Mammary epithelial cell (primary cell): ENCODE measurements at regions of chr20 and their contacts with region 1.

Region 1: GRCh38 chr20:235891-236290 is 8.8 kb downstream of the DEFB129 start:
- DNase-seq: peak; percentile 69
- H3K4me3 ChIP-seq: no peak overlapping the region
- H3K27ac ChIP-seq: peak overlapping the region; percentile 0
- H3K4me1 ChIP-seq: peaks cover 14% of the 10 kb centered on the region
- H3K27me3 ChIP-seq: no peaks in the 10 kb centered on the region
- CTCF ChIP-seq: peak; percentile 40 to 77

Region 2: GRCh38 chr20:168876-169275 is 67.0 kb before region 1 on chr20:
- CTCF ChIA-PET with region 1: no interaction called
- dilution Hi-C with region 1: loop called (anchors 5 kb)
- in situ Hi-C with region 1: no loop called
- intact Hi-C with region 1: no loop called
- DNase-seq: no peak
- H3K4me3 ChIP-seq: no peak overlapping the region
- H3K27ac ChIP-seq: no peak overlapping the region
- H3K4me1 ChIP-seq: no peaks in the 10 kb centered on the region
- H3K27me3 ChIP-seq: no peaks in the 10 kb centered on the region
- CTCF ChIP-seq: no peak

Region 3: GRCh38 chr20:189611-190010 is 46.3 kb before region 1 on chr20 and contains the start of gene DEFB128:
- CTCF ChIA-PET with region 1: no interaction called
- dilution Hi-C with region 1: no loop called
- in situ Hi-C with region 1: no loop called
- intact Hi-C with region 1: no loop called
- DNase-seq: no peak
- H3K4me3 ChIP-seq: no peak within 1 kb of the TSS
- H3K27ac ChIP-seq: no peak within 1 kb of the TSS
- H3K4me1 ChIP-seq: no peaks in the 10 kb centered on the region
- H3K27me3 ChIP-seq: peaks cover 11% of the 10 kb centered on the region
- CTCF ChIP-seq: no peak
- total RNA-seq, gene DEFB128: not detected

Region 4: DNA sequence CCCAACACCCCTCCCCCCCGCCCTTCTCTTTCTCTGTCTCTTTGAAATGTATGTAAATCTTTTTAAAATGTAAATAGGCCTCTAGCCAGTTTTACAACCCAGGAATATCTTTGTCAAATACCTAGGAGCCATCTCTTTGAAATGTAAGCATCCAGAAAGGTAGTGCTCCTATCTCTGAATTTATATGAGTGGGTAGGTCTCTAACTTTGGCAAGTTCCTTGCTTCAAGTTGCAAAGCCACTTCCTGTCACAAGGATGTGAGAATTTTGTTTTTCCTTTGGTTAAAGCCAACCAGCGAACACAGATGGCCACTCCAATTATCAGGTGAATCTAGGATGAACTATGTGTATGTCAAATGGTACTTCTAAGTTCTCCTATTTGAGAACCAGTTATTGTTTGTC is 15.5 kb after region 1 on chr20:
- CTCF ChIA-PET with region 1: no interaction called
- dilution Hi-C with region 1: no loop called
- in situ Hi-C with region 1: no loop called
- intact Hi-C with region 1: no loop called
- DNase-seq: no peak
- H3K4me3 ChIP-seq: no peak overlapping the region
- H3K27ac ChIP-seq: no peak overlapping the region
- H3K4me1 ChIP-seq: no peaks in the 10 kb centered on the region
- H3K27me3 ChIP-seq: no peaks in the 10 kb centered on the region
- CTCF ChIP-seq: no peak

Region 5: DNA sequence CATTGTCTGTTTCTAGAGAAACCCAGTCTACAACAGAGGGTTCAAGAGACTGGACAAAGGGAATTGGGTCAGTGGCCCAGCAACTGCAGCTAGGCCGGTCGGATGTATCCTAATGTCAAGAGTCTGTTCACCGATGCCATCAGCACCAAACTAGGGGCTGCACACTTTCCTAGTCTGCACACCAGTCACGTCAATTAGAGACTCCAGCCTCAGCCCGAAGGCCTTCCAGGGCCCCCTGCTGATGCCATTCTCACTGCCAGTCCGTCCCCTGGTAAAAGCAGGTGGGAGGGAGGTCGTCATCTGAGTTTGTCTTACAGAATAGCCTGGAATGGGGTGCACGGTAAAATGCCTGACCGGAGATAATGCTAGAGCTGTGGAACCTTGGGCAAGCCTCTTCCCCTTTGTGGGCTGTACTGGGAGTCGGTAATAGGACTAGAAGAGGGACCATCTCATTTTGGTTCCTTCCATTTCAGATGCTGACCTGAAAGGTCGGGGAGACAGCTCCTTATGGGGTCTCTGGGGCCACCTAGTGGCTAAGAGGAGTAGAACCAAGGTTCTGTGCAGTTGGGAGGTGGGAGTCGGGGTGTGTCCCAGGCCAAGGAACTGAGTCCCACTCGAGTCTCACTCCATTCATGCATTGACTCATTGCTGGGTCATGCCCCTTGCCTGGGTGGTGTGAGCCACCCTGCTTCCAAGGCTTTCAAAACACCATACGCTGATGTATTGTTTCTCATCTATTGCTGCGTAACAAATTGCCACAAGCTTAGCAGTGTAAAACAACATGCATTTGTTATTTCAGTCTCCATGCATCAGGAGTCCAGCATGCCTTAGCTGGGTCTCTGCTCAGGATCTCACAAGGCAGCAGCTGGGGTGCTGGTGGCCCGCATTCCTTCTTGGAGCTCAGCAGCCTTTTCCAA is 94.6 kb after region 1 on chr20:
- CTCF ChIA-PET with region 1: interaction called, 3 read pairs
- dilution Hi-C with region 1: loop called (anchors 5 kb)
- in situ Hi-C with region 1: no loop called
- intact Hi-C with region 1: loop called (anchors 1 kb)
- DNase-seq: peak; percentile 50
- H3K4me3 ChIP-seq: no peak overlapping the region
- H3K27ac ChIP-seq: no peak overlapping the region
- H3K4me1 ChIP-seq: peaks cover 10% of the 10 kb centered on the region
- H3K27me3 ChIP-seq: no peaks in the 10 kb centered on the region
- CTCF ChIP-seq: peak; percentile 84 to 89

Region 6: GRCh38 chr20:478949-479429 is 243.1 kb after region 1 on chr20:
- CTCF ChIA-PET with region 1: no interaction called
- dilution Hi-C with region 1: no loop called
- in situ Hi-C with region 1: no loop called
- intact Hi-C with region 1: loop called (anchors 5 kb)
- DNase-seq: peak; percentile 47
- H3K4me3 ChIP-seq: no peak overlapping the region
- H3K27ac ChIP-seq: no peak overlapping the region
- H3K4me1 ChIP-seq: no peaks in the 10 kb centered on the region
- H3K27me3 ChIP-seq: no peaks in the 10 kb centered on the region
- CTCF ChIP-seq: peak; percentile 36 to 60

Region 7: DNA sequence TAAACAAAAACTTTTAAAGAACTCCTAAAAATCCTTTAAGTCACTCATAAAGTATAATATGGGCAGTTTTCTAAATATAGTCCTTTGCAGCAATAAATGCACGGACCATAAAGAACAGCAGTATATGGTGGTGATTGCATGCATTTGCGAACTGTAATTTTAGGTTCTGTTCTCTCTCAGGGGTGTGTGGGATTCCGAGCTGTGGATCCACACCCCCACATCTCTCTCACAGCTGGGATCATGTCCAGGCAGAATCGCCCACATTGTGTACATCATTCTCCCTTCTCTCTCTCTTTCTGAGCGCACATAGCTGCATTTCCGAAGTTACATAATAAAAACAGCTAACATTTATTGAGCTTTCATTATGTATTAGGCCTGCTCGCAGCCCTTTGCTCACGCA is 503.8 kb after region 1 on chr20:
- CTCF ChIA-PET with region 1: no interaction called
- dilution Hi-C with region 1: no loop called
- in situ Hi-C with region 1: no loop called
- intact Hi-C with region 1: loop called (anchors 5 kb)
- DNase-seq: no peak
- H3K4me3 ChIP-seq: no peak overlapping the region
- H3K27ac ChIP-seq: no peak overlapping the region
- H3K4me1 ChIP-seq: no peaks in the 10 kb centered on the region
- H3K27me3 ChIP-seq: no peaks in the 10 kb centered on the region
- CTCF ChIP-seq: no peak